ENCODE measurements at regions of chr4 and their contacts with region 1.

Region 1: DNA sequence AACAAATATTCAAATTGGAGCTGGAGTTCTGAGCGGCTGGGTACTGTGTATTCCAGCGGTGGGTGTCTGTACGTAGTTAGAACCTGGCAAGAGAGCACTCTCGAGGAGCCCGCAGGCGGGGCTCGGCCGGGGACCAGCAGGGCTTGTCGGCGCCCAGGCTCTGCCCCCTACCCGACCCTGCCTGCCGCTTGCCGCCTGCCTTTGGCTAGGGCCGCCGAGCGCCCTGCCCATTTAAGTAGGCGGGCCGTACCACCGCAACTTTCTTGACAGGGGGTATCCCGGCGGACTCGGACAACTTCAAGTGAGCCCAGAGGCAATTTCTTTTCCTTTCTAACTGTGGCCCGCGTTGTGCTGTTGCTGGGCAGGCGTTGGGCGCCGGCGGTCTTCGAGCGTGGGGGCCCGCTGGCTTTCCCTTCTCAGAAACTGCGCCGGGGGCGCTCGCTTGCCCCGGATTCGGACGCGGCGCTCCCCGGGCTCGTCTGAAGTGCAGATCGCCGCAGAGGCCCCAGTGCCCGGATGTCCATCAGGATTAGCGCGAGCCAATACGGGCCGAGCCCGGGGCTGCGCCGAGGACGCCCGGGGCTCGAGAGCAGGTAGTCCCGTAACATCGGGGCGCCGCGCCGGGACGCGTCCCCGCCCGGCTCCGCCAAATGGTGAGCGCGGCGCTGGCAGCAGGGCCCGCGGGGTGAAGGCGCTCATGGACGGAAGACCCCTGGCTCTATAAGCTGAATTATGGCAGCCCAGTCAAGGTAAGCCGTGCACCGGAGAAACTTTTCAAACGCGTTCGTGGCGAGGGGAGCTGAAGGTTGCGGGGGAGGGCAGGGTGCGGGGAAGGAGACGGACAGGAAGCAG is 72.1 kb downstream of the AFF1 start:
- DNase-seq: peak; percentile 90 to 95
- H3K4me3 ChIP-seq: peak overlapping the region; percentile 88 to 91
- H3K27ac ChIP-seq: peak overlapping the region; percentile 92 to 94
- H3K4me1 ChIP-seq: peaks cover 0 to 46% (median 25%) of the 10 kb centered on the region in 4 donors
- H3K27me3 ChIP-seq: no peaks in the 10 kb centered on the region
- CTCF ChIP-seq: peak; percentile 4 to 52

Region 2: DNA sequence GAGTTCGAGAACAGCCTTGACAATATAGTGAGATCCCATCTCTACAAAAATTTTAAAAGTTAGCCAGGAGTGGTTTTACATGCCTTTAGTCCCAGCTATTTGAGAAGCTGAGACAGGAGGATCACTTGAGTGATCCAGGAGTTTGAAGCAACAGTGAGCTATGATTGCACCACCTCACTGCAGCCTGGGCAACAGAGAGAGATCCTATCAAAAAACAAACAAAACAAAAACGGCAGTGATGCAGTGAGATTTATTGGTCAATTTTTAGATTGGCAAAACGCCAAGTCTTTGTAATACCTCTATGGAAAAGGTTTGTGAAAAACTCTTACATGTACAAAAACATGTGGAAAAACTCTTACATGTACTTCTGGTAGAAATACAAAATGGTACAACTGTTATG is 321.5 kb before region 1 on chr4:
- intact Hi-C with region 1: no loop called
- DNase-seq: no peak
- H3K4me3 ChIP-seq: no peak overlapping the region
- H3K27ac ChIP-seq: no peak overlapping the region
- H3K4me1 ChIP-seq: peaks cover 0 to 3% (median 0%) of the 10 kb centered on the region in 4 donors
- H3K27me3 ChIP-seq: no peaks in the 10 kb centered on the region
- CTCF ChIP-seq: no peak

Region 3: GRCh38 chr4:86934771-86935565 is 71.9 kb before region 1 on chr4 and contains the start of gene AFF1:
- intact Hi-C with region 1: loop called (anchors 5 kb)
- DNase-seq: peak; percentile 89 to 98
- H3K4me3 ChIP-seq: peak within 1 kb of the TSS; percentile 84 to 91
- H3K27ac ChIP-seq: peak within 1 kb of the TSS; percentile 88 to 96
- H3K4me1 ChIP-seq: peaks cover 0 to 49% (median 28%) of the 10 kb centered on the region in 4 donors
- H3K27me3 ChIP-seq: no peaks in the 10 kb centered on the region
- CTCF ChIP-seq: peak; percentile 29 to 45

Region 4: DNA sequence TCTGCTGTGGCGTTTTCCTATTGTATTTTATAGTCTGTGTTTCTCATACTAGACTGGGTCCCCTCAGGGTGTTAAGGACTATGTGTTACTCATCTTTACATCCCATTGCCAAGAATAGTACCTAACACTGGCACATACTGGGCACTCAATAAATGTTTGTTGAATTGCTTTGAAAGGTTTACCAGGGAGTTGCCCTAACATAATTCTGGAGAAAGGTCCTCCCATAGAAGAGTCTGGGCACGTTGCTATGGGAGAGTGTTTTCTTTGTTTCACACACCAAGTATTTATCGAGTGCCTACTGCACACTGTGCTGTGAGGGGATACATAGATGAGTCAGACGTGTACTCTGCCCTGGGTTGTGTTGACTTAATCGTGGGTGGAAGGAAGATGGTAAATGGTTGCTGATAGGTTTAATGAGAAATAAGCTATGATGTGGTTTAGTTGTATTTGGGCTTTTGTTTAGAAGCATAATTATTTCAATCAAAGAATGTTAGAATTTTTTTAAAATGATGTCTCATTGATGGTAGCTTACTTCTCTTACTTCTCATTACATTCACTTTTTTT is 29.2 kb before region 1 on chr4:
- intact Hi-C with region 1: no loop called
- DNase-seq: no peak
- H3K4me3 ChIP-seq: no peak overlapping the region
- H3K27ac ChIP-seq: no peak overlapping the region
- H3K4me1 ChIP-seq: peaks cover 0 to 24% (median 9%) of the 10 kb centered on the region in 4 donors
- H3K27me3 ChIP-seq: no peaks in the 10 kb centered on the region
- CTCF ChIP-seq: no peak

Region 5: GRCh38 chr4:87044511-87045233 is 37.8 kb after region 1 on chr4:
- intact Hi-C with region 1: loop called (anchors 5 kb)
- DNase-seq: no peak
- H3K4me3 ChIP-seq: peak overlapping the region; percentile 20 to 33
- H3K27ac ChIP-seq: peak overlapping the region; percentile 77 to 89
- H3K4me1 ChIP-seq: peaks cover 0 to 86% (median 53%) of the 10 kb centered on the region in 4 donors
- H3K27me3 ChIP-seq: no peaks in the 10 kb centered on the region
- CTCF ChIP-seq: no peak

Region 6: DNA sequence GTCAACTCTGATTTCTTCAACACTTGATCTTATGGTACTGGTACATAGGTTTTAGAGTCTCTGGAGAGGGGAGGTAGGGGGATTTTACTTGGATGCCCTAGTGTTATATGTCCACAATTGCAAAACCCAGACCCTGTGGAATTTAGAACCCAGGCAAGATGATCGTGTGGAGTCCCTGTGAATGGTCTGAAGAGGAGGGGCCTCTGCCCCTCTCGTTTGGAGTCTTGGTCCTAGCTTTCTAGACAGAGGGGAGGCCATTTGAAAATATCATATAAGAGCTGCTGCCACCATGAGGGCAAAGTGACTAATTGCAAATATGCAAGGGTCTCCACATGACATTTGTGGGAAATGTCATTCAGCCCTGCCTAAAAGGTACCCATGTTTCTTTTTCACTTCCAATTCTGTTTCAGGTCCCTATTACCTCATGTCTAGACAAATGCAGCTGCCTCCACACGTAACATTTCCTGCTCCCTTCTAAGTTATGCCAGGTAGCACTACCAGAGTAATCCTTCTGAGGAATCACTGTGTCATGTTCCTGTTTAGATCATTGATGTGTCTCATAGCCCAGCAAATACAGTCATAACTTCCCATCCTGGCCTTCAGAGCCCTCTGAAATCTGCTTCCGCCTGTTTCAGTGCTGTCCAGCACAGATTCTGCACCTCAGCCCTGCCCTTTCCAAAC is 86.7 kb after region 1 on chr4:
- intact Hi-C with region 1: loop called (anchors 10 kb)
- DNase-seq: no peak
- H3K4me3 ChIP-seq: no peak overlapping the region
- H3K27ac ChIP-seq: peak overlapping the region in 1 of 2 donors; percentile 44
- H3K4me1 ChIP-seq: peaks cover 6 to 28% (median 15%) of the 10 kb centered on the region in 4 donors
- H3K27me3 ChIP-seq: no peaks in the 10 kb centered on the region
- CTCF ChIP-seq: peak; percentile 46 to 48